ENCODE measurements at regions of chr4 and their contacts with region 1.

Region 1: DNA sequence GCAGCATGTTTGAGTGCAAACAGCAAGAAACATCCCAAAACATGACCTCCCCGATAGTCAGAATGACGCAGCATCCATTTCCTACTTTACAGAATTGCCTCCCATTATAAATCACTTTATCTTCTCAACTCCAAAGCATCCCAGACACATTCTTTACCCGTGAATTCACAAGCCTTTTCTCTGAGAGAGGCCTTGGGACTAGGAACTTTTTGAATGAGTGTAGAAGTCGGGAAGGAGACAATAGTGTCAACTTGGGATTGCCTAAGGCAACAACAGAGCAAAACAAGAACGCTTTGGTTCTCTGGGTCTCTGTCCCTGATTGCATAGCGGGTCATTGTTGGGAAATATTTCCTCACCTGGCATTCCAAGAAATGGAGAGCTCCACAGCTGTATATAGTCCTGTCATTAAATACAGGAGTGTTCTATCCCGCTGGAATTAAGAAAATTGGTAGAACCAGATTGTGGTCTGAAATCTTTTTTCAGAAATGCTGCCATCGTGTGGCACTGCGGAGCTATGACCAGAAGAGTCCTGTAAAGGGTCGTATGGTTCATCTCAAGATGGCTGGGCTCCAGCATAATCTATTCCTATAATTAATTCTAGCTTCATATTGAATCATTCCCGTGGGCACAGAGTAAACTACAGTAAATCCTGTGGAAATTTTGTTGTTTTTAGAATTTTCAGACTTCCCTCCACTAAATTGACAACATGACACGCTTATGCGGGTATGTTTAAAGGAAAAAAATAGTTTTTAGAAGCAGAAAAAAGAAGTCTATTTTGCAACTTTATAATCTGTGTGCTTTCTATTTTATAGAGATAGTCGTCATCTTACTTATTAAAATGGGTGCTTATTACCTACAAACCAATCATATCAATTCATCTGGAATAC is 2.0 kb upstream of the SPP1 start:
- DNase-seq: peak; percentile 53 to 66 (median 62)
- H3K4me3 ChIP-seq: peak overlapping the region in 2 of 7 experiments; percentile 12 to 27
- H3K27ac ChIP-seq: no peak overlapping the region
- H3K4me1 ChIP-seq: peaks cover 9 to 33% (median 19%) of the 10 kb centered on the region in 4 experiments
- H3K27me3 ChIP-seq: no peaks in the 10 kb centered on the region

Region 2: DNA sequence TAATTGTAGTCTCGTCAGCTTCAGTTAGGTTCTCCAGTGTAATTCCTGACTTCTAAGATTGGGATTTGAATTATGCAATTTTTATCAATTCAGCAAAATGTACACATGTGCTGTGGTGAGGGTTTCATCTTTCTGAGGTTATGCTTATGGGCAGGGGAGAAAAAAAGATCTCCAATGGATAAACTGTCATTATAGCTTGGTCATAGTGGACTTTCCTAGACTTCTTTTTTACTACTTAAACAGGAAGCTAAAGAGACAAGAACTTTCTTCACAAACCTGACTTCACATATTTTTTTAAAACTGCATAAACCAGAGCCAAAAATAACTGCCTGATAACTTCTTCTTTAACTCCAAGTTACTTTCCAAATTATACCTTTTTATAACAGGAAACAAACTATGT is 19.7 kb before region 1 on chr4:
- CTCF ChIA-PET with region 1: interaction called, 33 read pairs
- POLR2A ChIA-PET with region 1: interaction called, 3 read pairs
- DNase-seq: peak in 2 of 3 donors; percentile 53 to 64
- H3K4me3 ChIP-seq: peak overlapping the region in 1 of 7 experiments; percentile 17
- H3K27ac ChIP-seq: no peak overlapping the region
- H3K4me1 ChIP-seq: peaks cover 4 to 52% (median 21%) of the 10 kb centered on the region in 4 experiments
- H3K27me3 ChIP-seq: no peaks in the 10 kb centered on the region

Region 3: DNA sequence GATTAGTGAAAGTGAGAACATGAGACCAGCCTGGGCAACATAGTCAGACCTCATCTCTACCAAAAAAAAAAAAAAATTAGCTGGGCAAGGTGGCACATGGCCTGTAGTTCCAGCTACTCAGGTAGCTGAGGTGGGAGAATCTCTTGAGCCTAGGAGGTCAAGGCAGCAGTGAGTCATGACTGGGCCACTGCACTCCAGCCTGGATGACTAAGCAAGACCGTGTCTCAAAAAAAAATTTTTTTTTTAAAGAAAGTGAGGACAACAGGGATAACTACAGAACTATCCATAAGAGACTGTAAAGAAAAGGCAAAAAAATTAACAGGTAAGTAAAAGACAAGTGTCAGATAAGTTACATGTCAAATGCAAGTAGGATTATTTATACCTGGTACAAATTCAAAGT is 11.5 kb before region 1 on chr4:
- CTCF ChIA-PET with region 1: interaction called, 33 read pairs
- POLR2A ChIA-PET with region 1: no interaction called
- DNase-seq: peak in 2 of 3 donors; percentile 31 to 45
- H3K4me3 ChIP-seq: no peak overlapping the region
- H3K27ac ChIP-seq: no peak overlapping the region
- H3K4me1 ChIP-seq: peaks cover 0 to 5% (median 4%) of the 10 kb centered on the region in 4 experiments
- H3K27me3 ChIP-seq: no peaks in the 10 kb centered on the region

Region 4: GRCh38 chr4:87985097-87985886 is 11.8 kb after region 1 on chr4:
- CTCF ChIA-PET with region 1: interaction called, 30 read pairs
- POLR2A ChIA-PET with region 1: no interaction called
- DNase-seq: peak; percentile 54 to 73 (median 69)
- H3K4me3 ChIP-seq: no peak overlapping the region
- H3K27ac ChIP-seq: no peak overlapping the region
- H3K4me1 ChIP-seq: peaks cover 0 to 2% (median 0%) of the 10 kb centered on the region in 4 experiments
- H3K27me3 ChIP-seq: no peaks in the 10 kb centered on the region

Region 5: DNA sequence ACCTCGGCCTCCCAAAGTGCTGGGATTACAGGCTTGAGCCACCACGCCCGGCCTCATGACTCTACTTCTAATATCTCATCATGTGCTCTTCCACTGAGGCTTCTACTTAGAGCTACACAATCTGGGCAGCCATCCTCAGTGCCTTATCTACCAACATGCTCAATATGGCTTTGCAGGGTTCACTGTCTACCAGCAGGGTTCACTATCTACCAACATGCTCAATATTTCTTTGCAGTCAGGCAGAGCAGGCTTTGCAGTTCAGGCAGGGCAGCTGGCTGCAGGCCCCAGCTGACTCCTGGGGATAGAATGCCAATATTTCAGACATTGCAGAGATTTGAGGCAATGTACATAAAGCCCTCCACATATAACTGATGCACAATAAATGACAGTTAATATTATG is 81.4 kb after region 1 on chr4:
- CTCF ChIA-PET with region 1: no interaction called
- POLR2A ChIA-PET with region 1: no interaction called
- DNase-seq: peak; percentile 17 to 68 (median 68)
- H3K4me3 ChIP-seq: no peak overlapping the region
- H3K27ac ChIP-seq: no peak overlapping the region
- H3K4me1 ChIP-seq: peaks cover 0 to 3% (median 0%) of the 10 kb centered on the region in 4 experiments
- H3K27me3 ChIP-seq: no peaks in the 10 kb centered on the region

Region 6: GRCh38 chr4:88070031-88070430 is 96.5 kb after region 1 on chr4:
- CTCF ChIA-PET with region 1: no interaction called
- POLR2A ChIA-PET with region 1: no interaction called
- DNase-seq: no peak
- H3K4me3 ChIP-seq: no peak overlapping the region
- H3K27ac ChIP-seq: no peak overlapping the region
- H3K4me1 ChIP-seq: no peaks in the 10 kb centered on the region
- H3K27me3 ChIP-seq: no peaks in the 10 kb centered on the region

Measured in common myeloid progenitor, CD34-positive (primary cell).